ENCODE measurements at regions of chr3 and their contacts with region 1.

Region 1: GRCh38 chr3:32591186-32591585 is 20.5 kb upstream of the DYNC1LI1 start:
- DNase-seq: no peak
- H3K4me3 ChIP-seq: no peak overlapping the region
- H3K27ac ChIP-seq: no peak overlapping the region
- H3K4me1 ChIP-seq: peaks cover 3 to 17% (median 11%) of the 10 kb centered on the region in 4 experiments; a peak in 6 of 7 replicates
- H3K27me3 ChIP-seq: no peaks in the 10 kb centered on the region; a peak in 2 of 7 replicates
- CTCF ChIP-seq: no peak
- EP300 ChIP-seq: no peak
- POLR2A ChIP-seq: no peak
- RAD21 ChIP-seq: no peak

Region 2: GRCh38 chr3:32531010-32531647 is 60.1 kb before region 1 on chr3:
- CTCF ChIA-PET with region 1: no interaction called
- POLR2A ChIA-PET with region 1: no interaction called
- DNase-seq: no peak
- H3K4me3 ChIP-seq: no peak overlapping the region
- H3K27ac ChIP-seq: no peak overlapping the region
- H3K4me1 ChIP-seq: no peaks in the 10 kb centered on the region
- H3K27me3 ChIP-seq: no peaks in the 10 kb centered on the region
- CTCF ChIP-seq: no peak
- EP300 ChIP-seq: no peak
- POLR2A ChIP-seq: no peak
- RAD21 ChIP-seq: no peak

Region 3: DNA sequence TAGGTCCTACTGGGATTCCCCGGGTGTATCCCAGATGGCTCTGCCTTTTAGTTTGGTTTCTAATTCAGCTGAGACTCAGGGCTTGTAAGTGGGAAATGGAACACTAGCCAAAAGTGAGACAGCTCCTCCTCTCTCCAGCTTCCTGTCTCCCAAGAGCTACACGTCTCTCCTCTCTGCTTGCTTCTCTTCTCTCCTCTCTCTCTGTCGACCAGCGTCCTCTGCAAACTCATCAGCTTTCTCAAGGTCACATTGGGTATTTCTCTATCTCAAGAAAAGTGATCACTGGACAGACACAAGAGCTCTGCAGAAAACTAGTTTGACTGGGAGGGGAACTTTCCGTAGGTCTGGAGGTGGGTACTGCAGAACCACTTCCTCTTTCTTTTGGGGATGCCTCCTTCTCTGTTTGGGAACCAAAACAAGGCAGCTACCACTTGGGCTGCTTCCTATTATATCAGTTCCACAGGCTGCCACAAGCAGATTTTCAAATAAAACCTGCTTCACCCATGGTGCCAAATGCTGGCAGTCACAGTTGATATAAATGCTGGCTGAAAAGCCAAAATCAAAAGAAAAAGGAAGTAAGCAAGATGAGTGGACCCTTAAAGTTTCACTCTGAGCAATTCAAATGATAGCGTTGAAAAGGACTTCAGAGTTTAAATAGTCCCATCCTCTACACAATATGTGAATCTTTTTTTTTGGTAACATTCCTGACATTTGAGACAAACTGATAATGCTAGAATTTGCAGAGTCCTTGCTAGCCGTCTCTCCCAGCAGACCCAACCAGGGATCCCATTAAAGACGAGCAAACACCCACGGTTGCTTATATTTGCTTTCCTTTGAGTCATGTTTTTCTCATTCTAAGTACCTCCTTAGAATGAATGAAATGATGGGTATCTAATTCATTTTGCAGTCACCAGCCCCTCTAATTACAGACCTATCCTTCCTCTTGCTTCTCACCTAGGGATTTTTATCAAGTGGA is 13.3 kb before region 1 on chr3:
- CTCF ChIA-PET with region 1: interaction called, 13 read pairs
- POLR2A ChIA-PET with region 1: interaction called, 8 read pairs
- DNase-seq: no peak
- H3K4me3 ChIP-seq: no peak overlapping the region
- H3K27ac ChIP-seq: no peak overlapping the region
- H3K4me1 ChIP-seq: no peaks in the 10 kb centered on the region
- H3K27me3 ChIP-seq: no peaks in the 10 kb centered on the region
- CTCF ChIP-seq: no peak
- EP300 ChIP-seq: no peak
- POLR2A ChIP-seq: no peak
- RAD21 ChIP-seq: no peak

Measured in H1 (cell line).